Vagina (tissue), 2 donors: ENCODE measurements at regions of chr22 and their contacts with region 1.

Region 1: DNA sequence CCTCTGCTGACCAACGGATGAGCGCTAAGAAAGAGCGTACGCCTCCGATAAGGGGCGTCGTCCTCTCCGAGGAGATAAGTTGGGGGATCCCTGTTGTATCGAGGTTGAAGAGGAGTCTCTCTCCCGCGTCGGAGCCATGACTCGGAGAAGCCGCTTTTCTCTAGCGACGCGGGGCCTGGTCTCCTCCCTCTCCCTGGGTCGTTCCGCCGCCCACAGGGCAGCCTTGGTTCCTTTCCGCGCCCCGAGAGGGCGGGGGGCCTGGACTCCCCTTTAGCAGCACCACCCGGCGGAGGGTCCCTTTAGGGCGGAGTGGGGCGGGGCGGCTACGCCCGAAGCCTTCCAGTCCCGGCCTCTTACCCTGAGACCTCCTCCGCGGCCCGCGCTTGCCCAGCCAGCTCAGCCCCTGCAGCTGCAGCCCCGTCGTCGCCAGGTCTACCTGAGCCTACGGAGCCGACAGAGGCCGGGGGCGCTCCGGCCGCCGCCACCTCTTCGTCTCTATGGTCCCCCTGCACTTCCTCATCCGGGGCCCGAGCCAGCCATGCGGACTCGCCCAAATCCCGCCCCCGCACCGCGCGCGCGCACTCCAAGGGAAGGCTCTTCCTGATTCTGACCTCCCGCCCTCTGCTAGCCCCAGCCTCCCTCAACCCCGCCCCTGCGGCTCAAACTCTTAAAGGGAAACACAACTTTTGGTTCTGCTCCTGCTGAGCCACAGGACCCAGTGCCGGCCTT is at the start of gene PRR14L:
- DNase-seq: peak; percentile 97 to 98
- H3K4me3 ChIP-seq: peak within 1 kb of the TSS; percentile 89 to 98
- H3K27ac ChIP-seq: peak within 1 kb of the TSS; percentile 84
- H3K4me1 ChIP-seq: peaks cover 51% of the 10 kb centered on the region
- H3K27me3 ChIP-seq: no peaks in the 10 kb centered on the region
- CTCF ChIP-seq: peak in 1 of 3 experiments; percentile 15
- POLR2A ChIP-seq: peak in 1 of 2 donors; percentile 32
- total RNA-seq, gene PRR14L: 37.3 TPM

Region 2: DNA sequence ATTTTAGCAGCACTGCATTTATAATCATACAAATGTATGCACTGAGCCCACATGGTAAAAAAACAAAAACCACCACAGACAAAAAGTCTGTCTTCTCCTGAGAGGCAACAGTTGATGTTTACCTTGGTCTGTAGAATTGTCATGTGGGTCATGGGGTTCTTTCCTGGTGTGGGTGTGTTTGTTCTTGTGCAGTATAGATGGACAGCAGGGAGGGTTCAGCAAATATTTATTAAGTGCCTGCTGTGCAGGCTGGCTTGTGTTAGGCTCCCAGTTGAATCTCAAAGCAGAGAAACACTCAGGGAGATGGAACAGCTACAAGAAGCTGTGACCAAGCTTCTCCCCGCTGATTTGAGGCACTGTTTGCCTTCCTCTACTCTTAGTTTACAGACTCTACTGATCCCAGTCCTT is 170.0 kb before region 1 on chr22:
- intact Hi-C with region 1: no loop called
- DNase-seq: no peak
- H3K4me3 ChIP-seq: no peak overlapping the region
- H3K27ac ChIP-seq: no peak overlapping the region
- H3K4me1 ChIP-seq: no peaks in the 10 kb centered on the region
- H3K27me3 ChIP-seq: no peaks in the 10 kb centered on the region
- CTCF ChIP-seq: no peak
- POLR2A ChIP-seq: no peak

Region 3: DNA sequence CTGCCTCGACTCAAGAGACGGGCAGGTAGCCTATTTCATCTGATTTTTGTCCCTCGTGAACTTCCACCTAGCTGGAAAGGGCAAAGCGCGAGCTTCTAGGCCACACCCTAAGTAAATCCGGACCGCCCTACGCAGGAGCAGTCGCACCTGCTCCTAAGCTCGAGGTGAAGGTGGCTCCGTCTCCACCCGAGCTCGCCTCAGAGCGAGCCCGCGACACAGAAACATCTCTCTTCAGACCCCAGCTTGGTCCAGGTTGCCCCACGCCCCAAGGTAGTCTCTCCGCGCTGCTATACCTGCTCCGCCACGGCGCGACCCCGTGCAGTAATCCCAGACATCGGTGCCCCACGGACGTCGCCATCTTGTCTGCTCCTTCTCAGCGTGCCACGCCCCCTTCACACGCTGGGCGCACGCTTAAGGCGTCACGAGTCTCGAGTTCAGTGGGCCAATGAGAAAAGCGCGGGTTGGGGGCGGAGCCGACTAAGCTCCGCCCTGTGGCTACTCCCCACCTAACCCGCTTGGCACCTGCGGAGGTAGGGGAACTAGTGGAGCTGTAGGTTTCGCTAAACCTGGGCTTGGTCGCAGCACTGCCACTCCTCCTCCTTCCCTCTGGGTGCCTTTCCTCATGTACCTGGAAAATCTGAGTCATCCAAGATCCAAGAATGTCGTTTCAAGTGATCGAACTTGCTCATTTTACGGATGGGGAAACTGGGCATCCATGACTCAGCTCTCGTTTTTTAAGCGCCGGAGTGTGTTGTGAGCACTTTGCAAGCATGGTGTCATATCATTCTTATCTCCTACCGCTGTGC is 87.7 kb before region 1 on chr22 and contains the start of gene PISD:
- intact Hi-C with region 1: loop called (anchors 10 kb)
- DNase-seq: peak; percentile 96 to 98
- H3K4me3 ChIP-seq: peak within 1 kb of the TSS; percentile 74 to 97
- H3K27ac ChIP-seq: peak within 1 kb of the TSS; percentile 75
- H3K4me1 ChIP-seq: peaks cover 16% of the 10 kb centered on the region
- H3K27me3 ChIP-seq: no peaks in the 10 kb centered on the region
- CTCF ChIP-seq: no peak
- POLR2A ChIP-seq: peak in 1 of 2 donors; percentile 28
- total RNA-seq, gene PISD: 50.3 TPM